Adrenal gland (tissue), 19 donors: ENCODE measurements at regions of chr16 and their contacts with region 1.

Region 1: DNA sequence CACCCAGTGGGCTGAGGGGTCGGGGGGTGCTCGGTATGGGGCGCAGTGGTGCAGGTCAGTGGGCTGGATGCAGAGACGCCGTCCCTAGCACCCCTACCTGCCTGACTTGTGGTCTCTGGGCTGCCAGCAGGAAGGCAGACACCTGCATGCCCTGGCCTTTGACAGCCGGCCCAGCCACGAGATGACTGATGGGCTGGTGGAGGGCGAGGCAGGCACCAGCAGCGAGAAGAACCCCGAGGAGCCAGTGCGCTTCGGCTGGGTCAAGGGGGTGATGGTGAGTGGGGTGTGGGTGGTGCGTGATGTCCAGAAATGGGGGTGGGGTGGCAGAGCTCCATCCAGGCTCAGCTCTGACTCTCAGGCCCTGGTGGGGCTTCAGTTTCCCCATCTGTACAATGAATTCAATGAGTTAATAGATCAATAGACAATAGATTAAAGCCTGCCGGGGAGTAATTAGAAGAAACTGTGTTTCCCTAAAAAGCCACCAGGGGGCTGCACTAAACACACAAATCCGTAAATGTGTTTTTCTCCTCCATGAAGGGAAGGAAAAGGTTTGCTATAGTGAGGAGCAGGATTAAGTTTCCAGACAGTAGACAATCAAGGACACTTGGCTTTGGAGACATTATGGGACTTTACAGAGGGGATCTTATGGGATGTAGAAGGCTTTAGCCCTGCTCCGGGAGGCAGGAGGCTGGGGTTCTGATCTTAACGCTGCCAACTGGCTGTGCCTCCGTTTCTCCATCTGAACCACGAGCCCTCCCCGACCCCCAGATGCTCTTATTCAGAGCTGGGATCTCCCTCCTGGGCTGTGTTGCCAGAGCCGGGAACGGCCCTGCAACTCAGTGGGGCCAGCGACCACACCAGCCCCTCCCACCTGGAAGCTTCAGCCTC is 2.2 kb downstream of the SLC12A3 start:
- DNase-seq: peak in 6 of 7 donors; percentile 41 to 78 (median 62)
- H3K4me3 ChIP-seq: no peak overlapping the region
- H3K27ac ChIP-seq: no peak overlapping the region
- H3K4me1 ChIP-seq: peaks cover 0 to 7% of the 10 kb centered on the region in 2 donors
- H3K27me3 ChIP-seq: no peaks in the 10 kb centered on the region
- CTCF ChIP-seq: peak; percentile 79 to 87 (median 84)
- POLR2A ChIP-seq: no peak

Region 2: GRCh38 chr16:56389554-56389953 is 477.6 kb before region 1 on chr16:
- intact Hi-C with region 1: no loop called
- DNase-seq: peak in 5 of 7 donors; percentile 47 to 69 (median 65)
- H3K4me3 ChIP-seq: no peak overlapping the region
- H3K27ac ChIP-seq: peak overlapping the region in 2 of 5 donors; percentile 33 to 39
- H3K4me1 ChIP-seq: peaks cover 0 to 5% of the 10 kb centered on the region in 2 donors
- H3K27me3 ChIP-seq: no peaks in the 10 kb centered on the region
- CTCF ChIP-seq: no peak
- POLR2A ChIP-seq: no peak

Region 3: GRCh38 chr16:56950881-56951771 is 83.9 kb after region 1 on chr16:
- intact Hi-C with region 1: loop called (anchors 5 kb)
- DNase-seq: peak in 6 of 7 donors; percentile 35 to 73 (median 52)
- H3K4me3 ChIP-seq: no peak overlapping the region
- H3K27ac ChIP-seq: peak overlapping the region in 1 of 5 donors; percentile 26
- H3K4me1 ChIP-seq: no peaks in the 10 kb centered on the region
- H3K27me3 ChIP-seq: no peaks in the 10 kb centered on the region
- CTCF ChIP-seq: peak in 5 of 6 experiments; percentile 19 to 59 (median 52)
- POLR2A ChIP-seq: no peak

Region 4: GRCh38 chr16:57045694-57046381 is 178.7 kb after region 1 on chr16:
- intact Hi-C with region 1: loop called (anchors 10 kb)
- DNase-seq: peak in 5 of 7 donors; percentile 29 to 81 (median 40)
- H3K4me3 ChIP-seq: no peak overlapping the region
- H3K27ac ChIP-seq: no peak overlapping the region
- H3K4me1 ChIP-seq: peaks cover 0 to 12% of the 10 kb centered on the region in 2 donors
- H3K27me3 ChIP-seq: no peaks in the 10 kb centered on the region
- CTCF ChIP-seq: peak in 5 of 6 experiments; percentile 19 to 52 (median 43)
- POLR2A ChIP-seq: no peak